ENCODE measurements at regions of chr17 and their contacts with region 1.

Region 1: GRCh38 chr17:42997984-42998938 is at the start of gene RPL27:
- DNase-seq: peak; percentile 91
- ATAC-seq: peak; percentile 98
- H3K4me3 Mint-ChIP-seq: peak within 1 kb of the TSS; percentile 92
- H3K27ac Mint-ChIP-seq: peak within 1 kb of the TSS; percentile 84
- H3K4me1 Mint-ChIP-seq: peaks cover 27% of the 10 kb centered on the region
- H3K27me3 Mint-ChIP-seq: no peaks in the 10 kb centered on the region
- total RNA-seq, gene RPL27: 1,039 to 1,066 TPM

Region 2: GRCh38 chr17:42819944-42820535 is 178.2 kb before region 1 on chr17:
- POLR2A ChIA-PET with region 1: interaction called, 11 read pairs
- DNase-seq: peak; percentile 68
- ATAC-seq: peak; percentile 23
- H3K4me3 Mint-ChIP-seq: no peak overlapping the region
- H3K27ac Mint-ChIP-seq: no peak overlapping the region
- H3K4me1 Mint-ChIP-seq: peaks cover 17% of the 10 kb centered on the region
- H3K27me3 Mint-ChIP-seq: no peaks in the 10 kb centered on the region

Region 3: GRCh38 chr17:42980398-42981397 is 17.6 kb before region 1 on chr17 and contains the start of gene RUNDC1:
- POLR2A ChIA-PET with region 1: interaction called, 12 read pairs
- DNase-seq: peak; percentile 95
- ATAC-seq: peak; percentile 76
- H3K4me3 Mint-ChIP-seq: peak within 1 kb of the TSS; percentile 99
- H3K27ac Mint-ChIP-seq: peak within 1 kb of the TSS; percentile 97
- H3K4me1 Mint-ChIP-seq: peaks cover 30% of the 10 kb centered on the region
- H3K27me3 Mint-ChIP-seq: peaks cover 3% of the 10 kb centered on the region
- total RNA-seq, gene RUNDC1: 16.5 to 17.8 TPM

Region 4: DNA sequence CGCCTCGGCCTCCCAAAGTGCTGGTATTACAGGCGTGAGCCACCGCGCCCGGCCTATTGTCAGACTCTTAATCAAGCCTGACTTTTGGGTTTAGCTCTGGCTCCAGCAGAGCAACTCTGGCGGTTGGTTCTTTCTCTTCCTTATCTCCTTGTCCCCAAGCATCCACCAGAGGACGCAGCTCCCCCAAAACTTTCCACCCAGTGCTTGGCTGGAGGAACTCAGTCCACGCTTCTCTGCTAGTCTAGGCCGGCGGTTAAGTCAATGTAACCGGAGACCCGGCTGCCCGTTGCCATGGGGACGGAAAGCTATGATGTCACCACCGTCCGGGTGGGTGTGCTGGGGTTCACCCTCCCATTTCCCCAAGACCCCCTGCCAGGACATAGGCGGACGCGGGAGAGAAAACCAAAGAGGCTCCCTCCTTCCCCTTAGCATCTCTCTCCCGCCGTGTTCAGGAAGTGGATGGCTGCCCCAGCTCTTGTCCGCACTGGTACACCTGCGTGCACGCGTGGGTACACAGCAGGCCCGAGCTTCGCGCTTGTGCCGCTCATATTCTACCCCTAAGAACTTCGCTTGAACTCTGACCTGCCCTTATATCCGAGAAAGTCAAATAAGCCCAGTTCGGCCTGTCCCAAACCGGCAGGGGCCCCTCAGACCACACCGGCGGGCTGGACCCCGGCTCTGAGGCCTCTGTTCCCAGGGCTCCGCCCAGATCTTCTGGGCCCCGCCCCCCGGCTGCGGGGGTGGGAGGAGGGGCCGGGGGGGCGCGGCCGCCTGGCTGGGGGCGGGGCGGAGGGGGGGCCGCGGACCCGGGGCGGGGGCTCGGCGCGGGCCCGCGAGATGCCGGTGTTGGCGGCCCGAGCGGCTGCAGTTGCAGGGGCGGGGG is 26.4 kb after region 1 on chr17 and contains the start of gene RND2:
- POLR2A ChIA-PET with region 1: interaction called, 18 read pairs
- DNase-seq: peak; percentile 73
- ATAC-seq: peak; percentile 61
- H3K4me3 Mint-ChIP-seq: peak within 1 kb of the TSS; percentile 87
- H3K27ac Mint-ChIP-seq: peak within 1 kb of the TSS; percentile 43
- H3K4me1 Mint-ChIP-seq: peaks cover 15% of the 10 kb centered on the region
- H3K27me3 Mint-ChIP-seq: peaks cover 28% of the 10 kb centered on the region
- total RNA-seq, gene RND2: 0.14 TPM in 1 of 2 experiments, not detected in the other

Region 5: DNA sequence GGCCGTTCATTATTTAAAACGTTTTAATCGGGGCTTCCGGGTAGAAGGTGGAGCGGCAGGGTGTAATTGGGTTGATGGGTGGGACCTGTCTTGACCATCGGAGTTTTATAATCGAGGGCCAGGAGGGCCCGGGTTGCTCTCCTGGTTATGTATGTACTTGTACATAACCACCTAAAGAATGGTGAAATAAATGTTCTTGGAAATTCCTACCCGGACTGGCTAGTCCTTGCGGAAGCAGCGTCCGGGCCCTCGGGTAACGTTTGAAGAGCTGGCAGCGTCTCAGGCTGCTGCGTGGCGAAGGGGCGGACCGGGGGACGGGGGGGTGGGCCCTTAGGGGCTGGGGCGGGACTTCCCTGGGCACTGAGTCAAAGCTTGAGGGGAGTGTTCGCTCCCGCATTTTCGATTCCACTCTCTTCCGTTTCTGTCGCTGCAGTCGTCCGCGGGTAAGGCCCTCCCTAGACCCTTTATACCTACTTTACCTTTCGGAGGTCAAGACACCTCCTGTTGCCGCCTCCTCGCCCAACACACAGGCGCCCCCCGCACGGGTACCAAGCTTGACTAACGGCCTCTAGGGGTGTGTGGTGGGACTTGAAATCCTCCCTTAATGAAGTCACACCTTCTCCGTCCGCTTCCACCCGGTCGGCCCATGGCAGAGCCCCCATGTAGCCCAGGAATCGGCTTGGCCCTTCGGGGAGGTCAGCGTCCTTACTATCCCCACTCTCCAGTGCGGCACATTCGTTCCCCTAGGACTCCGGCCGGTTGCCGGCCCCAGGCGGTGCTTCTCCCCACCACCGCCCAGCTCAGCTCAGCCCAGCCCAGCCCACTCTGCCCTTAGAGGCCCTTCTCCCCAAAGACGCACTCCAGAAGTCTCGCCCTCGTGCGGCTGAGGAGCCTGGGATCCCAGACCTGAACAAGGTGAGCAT is 213.5 kb after region 1 on chr17 and contains the start of gene TMEM106A:
- POLR2A ChIA-PET with region 1: interaction called, 11 read pairs
- DNase-seq: peak; percentile 80
- ATAC-seq: peak; percentile 90
- H3K4me3 Mint-ChIP-seq: peak within 1 kb of the TSS; percentile 98
- H3K27ac Mint-ChIP-seq: peak within 1 kb of the TSS; percentile 94
- H3K4me1 Mint-ChIP-seq: peaks cover 18% of the 10 kb centered on the region
- H3K27me3 Mint-ChIP-seq: no peaks in the 10 kb centered on the region
- total RNA-seq, gene TMEM106A: 20.3 TPM

Region 6: GRCh38 chr17:43720311-43721060 is 722.2 kb after region 1 on chr17:
- POLR2A ChIA-PET with region 1: interaction called, 11 read pairs
- DNase-seq: peak; percentile 85
- ATAC-seq: peak; percentile 90
- H3K4me3 Mint-ChIP-seq: peak overlapping the region; percentile 93
- H3K27ac Mint-ChIP-seq: peak overlapping the region; percentile 98
- H3K4me1 Mint-ChIP-seq: peaks cover 9% of the 10 kb centered on the region
- H3K27me3 Mint-ChIP-seq: peaks cover 19% of the 10 kb centered on the region

Measured in activated naive CD8-positive, alpha-beta T cell treated with anti-CD3 and anti-CD28 coated beads, Interleukin-2, amount 10 ng/mL, durations not matched to agents 7 days and 5 days (primary cell).